ENCODE measurements at regions of chr15 and their contacts with region 1.

Region 1: DNA sequence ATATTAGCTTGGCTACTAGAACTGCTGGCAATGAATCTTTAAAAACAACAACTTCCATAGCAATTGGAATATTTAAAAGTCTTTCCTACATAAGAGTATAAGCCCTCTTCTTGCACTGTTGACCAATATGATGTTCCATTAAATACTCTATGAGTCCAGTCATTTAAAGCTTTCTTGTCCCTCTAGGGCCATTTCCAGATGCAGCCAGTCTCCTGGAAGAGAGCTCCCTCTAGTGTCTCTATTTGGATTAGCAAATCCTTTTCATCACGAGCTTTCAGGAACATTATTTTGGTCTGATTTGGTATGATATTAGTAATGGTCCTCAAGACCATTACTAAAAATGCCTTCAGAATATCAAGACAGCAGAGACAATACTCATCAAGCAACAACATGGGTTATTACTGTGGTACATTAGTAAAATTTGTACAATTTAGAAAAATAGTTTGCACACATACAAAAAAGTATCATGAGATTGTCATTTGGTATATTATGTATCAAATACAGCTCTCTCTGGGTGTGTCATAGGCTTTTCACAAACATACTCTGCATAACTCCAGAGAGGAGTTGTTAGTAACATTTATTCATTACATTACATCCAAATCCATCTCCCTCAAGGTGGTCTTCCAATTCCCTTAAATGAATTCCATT is 101.3 kb downstream of the DPH6 start:
- DNase-seq: no peak
- ATAC-seq: no peak
- H3K4me3 ChIP-seq: no peak overlapping the region
- H3K27ac ChIP-seq: no peak overlapping the region
- H3K4me1 ChIP-seq: no peaks in the 10 kb centered on the region
- H3K27me3 ChIP-seq: no peaks in the 10 kb centered on the region
- CTCF ChIP-seq: peak; percentile 48 to 84 (median 80)

Region 2: DNA sequence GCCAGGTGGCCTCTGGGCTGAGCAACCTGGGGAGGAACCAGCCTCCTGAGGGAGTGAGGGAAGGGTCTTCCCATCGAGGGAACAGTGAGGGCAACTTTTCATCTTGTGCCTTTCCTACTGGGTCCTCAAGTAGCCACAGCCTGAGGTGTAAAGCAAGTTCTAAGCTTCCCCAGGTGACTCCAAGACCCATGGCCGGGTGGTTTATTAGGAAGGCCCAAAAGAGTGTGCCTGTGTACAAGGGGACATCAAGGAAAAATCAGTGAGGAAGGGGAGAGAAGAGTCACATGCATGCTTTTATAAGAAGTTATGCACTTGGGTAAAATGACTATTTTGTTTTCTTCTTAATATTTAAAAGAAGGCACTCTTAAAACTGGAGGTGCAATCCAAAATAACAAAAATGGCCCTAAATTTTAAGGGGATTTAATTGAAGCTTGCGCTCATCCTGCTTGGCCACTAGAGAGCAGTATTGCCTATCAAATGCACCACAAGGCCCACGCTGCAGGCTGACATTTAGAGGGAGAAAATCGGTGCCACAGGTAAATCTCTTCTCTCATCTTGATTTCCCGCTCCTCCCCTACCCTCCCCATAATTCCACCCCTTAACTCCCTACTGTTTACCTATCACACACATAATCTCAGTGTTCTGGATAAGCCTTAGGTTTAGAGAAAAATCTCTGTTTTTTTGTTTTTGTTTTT is 366.3 kb before region 1 on chr15:
- intact Hi-C with region 1: loop called in 9 of 10 experiments (anchors 2 to 10 kb)
- DNase-seq: no peak
- ATAC-seq: peak in 3 of 8 donors; percentile 44 to 58 (median 53)
- H3K4me3 ChIP-seq: no peak overlapping the region
- H3K27ac ChIP-seq: no peak overlapping the region
- H3K4me1 ChIP-seq: no peaks in the 10 kb centered on the region
- H3K27me3 ChIP-seq: no peaks in the 10 kb centered on the region
- CTCF ChIP-seq: peak; percentile 57 to 80 (median 78)

Region 3: DNA sequence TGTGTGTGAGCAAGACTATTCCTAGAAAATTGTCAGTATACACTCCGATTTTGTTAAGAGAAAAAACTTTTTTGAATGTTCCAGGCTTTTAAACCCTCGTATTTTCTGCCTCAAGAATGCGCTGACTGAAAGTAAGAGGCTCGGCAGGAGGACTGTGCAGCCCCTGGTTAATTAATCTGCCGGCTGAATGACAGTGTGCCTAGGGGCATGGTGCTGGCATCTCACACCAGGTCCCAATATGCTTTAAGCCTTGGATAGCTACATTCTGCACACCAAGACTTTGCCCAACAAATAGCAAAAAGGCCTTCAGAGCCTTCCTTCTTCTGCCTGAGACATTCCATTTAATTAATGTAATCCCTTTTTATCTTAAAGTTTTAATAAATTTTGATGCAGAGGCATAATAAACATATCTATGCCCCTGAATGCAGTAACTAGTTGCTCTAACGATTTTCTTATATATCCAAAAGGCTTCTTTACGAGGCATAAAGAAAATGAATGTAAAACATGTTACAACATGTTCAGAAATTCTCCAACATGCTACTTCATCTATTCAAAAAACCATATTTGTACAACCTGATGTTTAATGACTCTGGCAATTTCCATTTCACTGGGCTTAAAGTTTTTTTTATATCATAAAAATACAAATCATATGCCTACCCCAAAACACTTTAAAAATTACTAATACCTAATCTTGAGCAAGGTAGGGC is 63.4 kb after region 1 on chr15:
- intact Hi-C with region 1: loop called in 1 of 10 experiments (anchors 10 kb)
- DNase-seq: no peak
- ATAC-seq: no peak
- H3K4me3 ChIP-seq: no peak overlapping the region
- H3K27ac ChIP-seq: no peak overlapping the region
- H3K4me1 ChIP-seq: peaks cover 0 to 5% (median 0%) of the 10 kb centered on the region in 9 donors
- H3K27me3 ChIP-seq: no peaks in the 10 kb centered on the region
- CTCF ChIP-seq: no peak

Measured in heart right ventricle (tissue), 16 donors.